Sigmoid colon (tissue), 7 donors: ENCODE measurements at regions of chr2 and their contacts with region 1.

Region 1: DNA sequence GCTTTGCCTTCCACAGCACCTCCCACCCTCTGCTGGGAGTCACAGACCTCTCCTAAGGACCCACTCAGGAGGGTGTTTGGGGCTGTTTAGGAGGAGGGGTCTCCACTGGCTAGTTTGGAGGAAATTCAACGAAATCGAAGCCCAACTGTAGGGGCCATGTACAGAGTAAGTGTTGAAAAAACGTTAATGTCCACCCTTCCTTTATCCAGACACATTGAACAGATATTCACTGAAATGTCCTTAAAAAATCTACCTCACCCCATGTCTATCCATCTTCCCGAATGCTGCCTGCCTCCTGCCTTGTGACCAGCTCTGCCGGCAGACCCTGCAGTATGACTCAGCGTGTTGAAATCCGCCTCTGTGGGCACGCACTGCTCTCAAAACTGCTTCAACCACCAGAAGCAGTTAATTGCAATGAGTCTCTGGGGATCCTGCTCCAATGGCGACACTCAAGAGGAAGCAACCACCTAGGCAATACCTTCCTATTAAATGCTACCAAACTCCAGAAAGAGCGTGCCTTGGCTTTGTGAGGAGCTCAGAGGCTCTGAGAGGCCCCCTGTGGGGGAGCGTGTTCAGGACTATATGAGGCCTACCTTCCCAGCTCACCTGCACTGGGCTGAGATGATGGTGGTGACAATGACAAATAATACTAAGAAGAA is 61.4 kb upstream of the RTN4 start:
- DNase-seq: peak; percentile 92
- H3K4me3 ChIP-seq: no peak overlapping the region
- H3K27ac ChIP-seq: peak overlapping the region; percentile 77 to 89 (median 88)
- H3K4me1 ChIP-seq: peaks cover 0 to 74% (median 56%) of the 10 kb centered on the region in 4 donors
- H3K27me3 ChIP-seq: no peaks in the 10 kb centered on the region
- CTCF ChIP-seq: no peak
- EP300 ChIP-seq: peak in 1 of 4 donors; percentile 31
- POLR2A ChIP-seq: no peak

Region 2: GRCh38 chr2:55133467-55134315 is 22.0 kb after region 1 on chr2:
- intact Hi-C with region 1: loop called (anchors 2 kb)
- DNase-seq: peak; percentile 74
- H3K4me3 ChIP-seq: peak overlapping the region; percentile 14 to 46 (median 38)
- H3K27ac ChIP-seq: peak overlapping the region; percentile 65 to 82 (median 75)
- H3K4me1 ChIP-seq: peaks cover 0 to 43% (median 39%) of the 10 kb centered on the region in 4 donors
- H3K27me3 ChIP-seq: no peaks in the 10 kb centered on the region
- CTCF ChIP-seq: no peak
- EP300 ChIP-seq: peak in 2 of 4 donors; percentile 13 to 47
- POLR2A ChIP-seq: no peak

Region 3: GRCh38 chr2:55159037-55159651 is 47.4 kb after region 1 on chr2:
- intact Hi-C with region 1: loop called (anchors 5 kb)
- DNase-seq: peak; percentile 78
- H3K4me3 ChIP-seq: no peak overlapping the region
- H3K27ac ChIP-seq: peak overlapping the region in 3 of 4 donors; percentile 7 to 78 (median 38)
- H3K4me1 ChIP-seq: peaks cover 0 to 79% (median 67%) of the 10 kb centered on the region in 4 donors
- H3K27me3 ChIP-seq: no peaks in the 10 kb centered on the region
- CTCF ChIP-seq: no peak
- EP300 ChIP-seq: no peak
- POLR2A ChIP-seq: no peak

Region 4: DNA sequence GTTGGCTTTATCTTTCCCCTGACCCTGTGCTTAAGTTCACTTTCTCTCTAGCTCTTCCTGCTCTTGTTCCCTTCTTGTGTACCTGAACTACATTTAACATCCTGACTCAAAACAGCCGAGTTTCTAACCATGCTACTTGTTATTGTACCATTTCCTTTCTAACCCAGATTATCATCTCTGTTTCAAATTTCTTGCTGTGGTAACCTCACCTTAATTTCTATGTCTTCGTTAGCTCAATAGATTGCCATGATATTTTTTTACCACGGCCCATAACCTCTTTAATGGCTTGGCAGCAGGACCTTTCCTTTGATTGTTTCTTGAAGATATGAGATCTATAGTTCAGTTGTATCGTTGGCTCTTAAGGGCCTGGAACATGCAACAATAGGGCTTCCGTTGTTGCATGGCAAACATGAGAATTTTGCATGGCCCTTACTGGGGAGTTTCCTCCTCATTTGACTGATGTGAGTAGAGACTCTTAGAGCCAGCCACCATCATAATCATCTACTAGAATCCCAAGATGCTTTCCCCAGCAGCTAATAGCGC is 418.9 kb after region 1 on chr2:
- intact Hi-C with region 1: no loop called
- DNase-seq: no peak
- H3K4me3 ChIP-seq: no peak overlapping the region
- H3K27ac ChIP-seq: no peak overlapping the region
- H3K4me1 ChIP-seq: no peaks in the 10 kb centered on the region
- H3K27me3 ChIP-seq: no peaks in the 10 kb centered on the region
- CTCF ChIP-seq: no peak
- EP300 ChIP-seq: no peak
- POLR2A ChIP-seq: no peak